ENCODE measurements at regions of chr2 and their contacts with region 1.

Region 1: GRCh38 chr2:216519154-216519762 is 20.6 kb downstream of the RPL37A start:
- DNase-seq: peak in 2 of 4 donors; percentile 57 to 83
- ATAC-seq: peak; percentile 85
- H3K4me3 ChIP-seq: no peak overlapping the region
- H3K27ac ChIP-seq: no peak overlapping the region
- H3K4me1 ChIP-seq: no peaks in the 10 kb centered on the region
- H3K27me3 ChIP-seq: no peaks in the 10 kb centered on the region
- CTCF ChIP-seq: peak; percentile 67 to 80

Region 2: DNA sequence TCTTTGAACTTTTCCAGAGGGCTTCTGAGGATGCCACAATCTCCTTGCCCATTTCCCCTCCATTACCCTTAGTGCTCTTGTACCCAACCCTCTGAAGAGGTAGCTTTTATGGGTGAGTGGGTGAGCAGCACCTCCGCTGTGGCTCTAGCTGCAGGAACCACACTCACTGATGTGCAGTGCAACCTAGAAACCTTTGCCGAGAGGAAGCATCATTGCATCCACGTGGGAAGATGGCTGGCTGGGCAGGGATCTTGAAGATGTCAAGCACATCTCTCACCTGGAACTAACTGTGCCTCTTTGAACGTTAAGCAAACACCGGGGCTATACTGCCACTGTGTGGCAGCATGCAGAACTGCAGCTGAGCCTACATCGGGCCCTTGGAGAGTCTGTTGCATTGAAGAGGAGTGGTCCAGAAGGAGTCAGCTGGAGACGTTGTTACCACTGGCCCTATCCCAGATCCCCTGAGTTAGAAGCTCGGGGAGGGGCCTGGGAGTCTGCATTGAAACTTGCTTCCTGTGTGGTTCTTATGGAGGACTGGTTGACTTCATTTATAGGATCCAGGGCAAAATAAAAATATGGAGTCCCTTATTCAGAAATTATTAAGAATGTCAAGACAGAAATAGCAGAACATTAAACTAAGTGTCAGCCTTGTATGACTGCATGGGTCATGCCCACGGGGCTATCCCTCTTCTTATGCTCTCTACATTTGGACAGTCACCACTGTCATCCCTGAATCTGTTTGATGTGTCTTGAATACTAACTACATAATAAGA is 147.4 kb after region 1 on chr2:
- intact Hi-C with region 1: loop called (anchors 2 to 5 kb)
- DNase-seq: peak in 3 of 4 donors; percentile 52 to 84 (median 71)
- ATAC-seq: peak; percentile 93
- H3K4me3 ChIP-seq: no peak overlapping the region
- H3K27ac ChIP-seq: no peak overlapping the region
- H3K4me1 ChIP-seq: peaks cover 3 to 7% of the 10 kb centered on the region in 2 donors
- H3K27me3 ChIP-seq: no peaks in the 10 kb centered on the region
- CTCF ChIP-seq: peak; percentile 95 to 98

Measured in left lung (tissue), 14 donors.